Head of caudate nucleus (tissue), 42 donors: ENCODE measurements at regions of chr12 and their contacts with region 1.

Region 1: DNA sequence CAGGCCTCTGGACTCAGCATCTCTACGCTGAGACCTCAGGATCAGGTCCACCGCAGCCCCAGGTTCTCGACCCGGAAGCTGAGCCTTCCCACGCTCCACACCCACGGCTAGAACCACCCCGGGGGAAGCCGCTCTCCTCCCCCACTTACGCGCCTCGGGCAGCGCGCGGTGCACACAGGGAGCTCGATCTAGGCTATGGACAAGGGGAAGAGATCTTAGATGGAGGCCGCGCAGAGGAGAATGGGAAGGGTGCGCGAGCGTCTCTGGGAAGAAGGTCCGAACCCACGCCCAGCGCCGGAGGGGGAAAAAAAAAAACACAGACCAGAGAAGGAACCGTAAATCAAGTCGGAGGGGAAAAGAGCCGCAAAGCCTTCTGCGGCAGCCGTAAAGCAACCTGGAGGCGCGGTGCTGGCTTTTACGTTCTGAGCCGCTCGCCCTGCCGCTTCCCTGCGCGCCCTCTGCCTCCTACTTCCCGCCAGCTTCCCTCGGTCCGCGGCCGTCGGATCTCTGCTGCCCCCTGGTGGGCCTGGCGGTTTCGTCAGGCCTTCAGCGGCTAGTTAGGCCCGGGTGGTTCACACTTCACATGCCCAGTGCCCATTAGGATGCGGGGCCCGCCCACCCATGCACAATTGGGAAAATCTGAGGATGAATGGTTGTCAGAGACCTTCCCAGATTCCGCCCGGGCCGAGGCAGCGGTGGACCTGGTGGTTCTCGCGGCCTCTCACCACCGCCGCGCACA is at the start of gene RAD52:
- DNase-seq: peak; percentile 93 to 99 (median 98)

Region 2: GRCh38 chr12:569803-570434 is 379.7 kb before region 1 on chr12:
- intact Hi-C with region 1: loop called (anchors 2 kb)
- DNase-seq: peak; percentile 72 to 95 (median 88)

Region 3: DNA sequence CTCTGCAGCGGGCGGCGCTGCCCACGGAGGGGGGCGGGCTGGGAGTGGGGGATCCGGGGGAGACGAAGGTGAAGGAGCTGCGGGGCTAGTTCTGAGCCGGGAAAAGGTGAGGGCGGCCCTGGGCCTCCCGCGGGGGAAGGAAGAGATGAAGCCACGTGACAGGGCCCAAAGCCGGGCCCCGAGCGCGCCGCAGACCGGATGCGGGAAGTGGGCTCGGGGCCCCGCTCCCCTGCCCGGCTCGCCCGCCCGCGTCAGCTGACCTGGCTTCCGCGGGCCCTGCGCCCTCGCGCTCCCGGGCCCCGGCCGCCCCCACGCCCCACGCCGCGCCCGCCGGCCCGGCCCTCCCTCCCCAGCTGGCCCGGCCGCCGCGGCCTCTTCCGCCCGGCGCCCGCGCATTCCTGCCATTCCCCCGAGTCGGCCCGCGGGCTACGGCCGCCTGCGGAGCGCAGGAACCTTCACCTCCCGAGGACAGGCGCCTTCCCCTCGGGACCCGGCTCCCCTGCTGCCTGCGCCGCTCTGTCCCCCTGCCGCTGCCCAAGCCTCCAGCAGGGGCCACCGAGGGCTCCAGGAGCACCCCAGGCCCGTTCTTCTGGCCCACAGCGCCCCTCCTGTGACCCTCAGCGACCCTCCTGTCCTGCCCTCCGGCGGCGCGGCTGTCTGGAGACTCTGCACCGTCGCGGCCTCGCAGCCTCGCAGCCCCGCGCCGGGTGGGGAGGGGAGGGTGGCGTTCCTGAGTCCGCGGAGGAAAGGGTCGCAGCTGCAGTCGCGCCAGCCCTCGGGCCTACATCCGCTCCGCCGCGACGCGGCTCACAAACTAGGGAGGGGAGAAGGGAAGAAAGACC is 306.8 kb before region 1 on chr12:
- intact Hi-C with region 1: loop called (anchors 10 kb)
- DNase-seq: peak in 40 of 42 donors; percentile 44 to 87 (median 72)

Region 4: GRCh38 chr12:990661-991349 is 41.2 kb after region 1 on chr12 and contains the start of gene ERC1:
- intact Hi-C with region 1: loop called (anchors 5 kb)
- DNase-seq: peak; percentile 62 to 96 (median 90)

Region 5: GRCh38 chr12:1047898-1048660 is 98.5 kb after region 1 on chr12:
- intact Hi-C with region 1: no loop called
- DNase-seq: peak in 2 of 42 donors; percentile 11 to 28